ENCODE measurements at regions of chr11 and their contacts with region 1.

Region 1: GRCh38 chr11:9573052-9573774 is at the start of gene WEE1:
- DNase-seq: peak; percentile 99
- ATAC-seq: peak; percentile 96
- H3K4me3 Mint-ChIP-seq: peak within 1 kb of the TSS; percentile 97
- H3K27ac Mint-ChIP-seq: peak within 1 kb of the TSS; percentile 84
- H3K4me1 Mint-ChIP-seq: peaks cover 27% of the 10 kb centered on the region
- H3K27me3 Mint-ChIP-seq: peaks cover 17% of the 10 kb centered on the region
- total RNA-seq, gene WEE1: 47.8 to 50.5 TPM

Region 2: GRCh38 chr11:9170450-9170849 is 402.8 kb before region 1 on chr11:
- POLR2A ChIA-PET with region 1: no interaction called
- DNase-seq: no peak
- ATAC-seq: no peak
- H3K4me3 Mint-ChIP-seq: no peak overlapping the region
- H3K27ac Mint-ChIP-seq: no peak overlapping the region
- H3K4me1 Mint-ChIP-seq: peaks cover 15% of the 10 kb centered on the region
- H3K27me3 Mint-ChIP-seq: no peaks in the 10 kb centered on the region

Region 3: GRCh38 chr11:9460322-9461067 is 112.7 kb before region 1 on chr11 and contains the start of gene ZNF143:
- POLR2A ChIA-PET with region 1: interaction called, 15 read pairs
- DNase-seq: peak; percentile 99
- ATAC-seq: peak; percentile 91
- H3K4me3 Mint-ChIP-seq: peak within 1 kb of the TSS; percentile 95
- H3K27ac Mint-ChIP-seq: peak within 1 kb of the TSS; percentile 95
- H3K4me1 Mint-ChIP-seq: peaks cover 20% of the 10 kb centered on the region
- H3K27me3 Mint-ChIP-seq: no peaks in the 10 kb centered on the region
- total RNA-seq, gene ZNF143: 37.7 to 48.8 TPM

Region 4: GRCh38 chr11:9534791-9535781 is 38.1 kb before region 1 on chr11:
- POLR2A ChIA-PET with region 1: interaction called, 10 read pairs
- DNase-seq: peak; percentile 87
- ATAC-seq: peak; percentile 76
- H3K4me3 Mint-ChIP-seq: no peak overlapping the region
- H3K27ac Mint-ChIP-seq: no peak overlapping the region
- H3K4me1 Mint-ChIP-seq: no peaks in the 10 kb centered on the region
- H3K27me3 Mint-ChIP-seq: no peaks in the 10 kb centered on the region

Region 5: GRCh38 chr11:9601037-9601875 is 28.0 kb after region 1 on chr11:
- POLR2A ChIA-PET with region 1: interaction called, 25 read pairs
- DNase-seq: peak; percentile 58
- ATAC-seq: peak; percentile 92
- H3K4me3 Mint-ChIP-seq: peak overlapping the region; percentile 74
- H3K27ac Mint-ChIP-seq: peak overlapping the region; percentile 78
- H3K4me1 Mint-ChIP-seq: peaks cover 28% of the 10 kb centered on the region
- H3K27me3 Mint-ChIP-seq: peaks cover 13% of the 10 kb centered on the region

Measured in activated naive CD8-positive, alpha-beta T cell treated with anti-CD3 and anti-CD28 coated beads, Interleukin-2, amount 10 ng/mL, durations not matched to agents 7 days and 5 days (primary cell).